ENCODE measurements at regions of chr2 and their contacts with region 1.

Region 1: DNA sequence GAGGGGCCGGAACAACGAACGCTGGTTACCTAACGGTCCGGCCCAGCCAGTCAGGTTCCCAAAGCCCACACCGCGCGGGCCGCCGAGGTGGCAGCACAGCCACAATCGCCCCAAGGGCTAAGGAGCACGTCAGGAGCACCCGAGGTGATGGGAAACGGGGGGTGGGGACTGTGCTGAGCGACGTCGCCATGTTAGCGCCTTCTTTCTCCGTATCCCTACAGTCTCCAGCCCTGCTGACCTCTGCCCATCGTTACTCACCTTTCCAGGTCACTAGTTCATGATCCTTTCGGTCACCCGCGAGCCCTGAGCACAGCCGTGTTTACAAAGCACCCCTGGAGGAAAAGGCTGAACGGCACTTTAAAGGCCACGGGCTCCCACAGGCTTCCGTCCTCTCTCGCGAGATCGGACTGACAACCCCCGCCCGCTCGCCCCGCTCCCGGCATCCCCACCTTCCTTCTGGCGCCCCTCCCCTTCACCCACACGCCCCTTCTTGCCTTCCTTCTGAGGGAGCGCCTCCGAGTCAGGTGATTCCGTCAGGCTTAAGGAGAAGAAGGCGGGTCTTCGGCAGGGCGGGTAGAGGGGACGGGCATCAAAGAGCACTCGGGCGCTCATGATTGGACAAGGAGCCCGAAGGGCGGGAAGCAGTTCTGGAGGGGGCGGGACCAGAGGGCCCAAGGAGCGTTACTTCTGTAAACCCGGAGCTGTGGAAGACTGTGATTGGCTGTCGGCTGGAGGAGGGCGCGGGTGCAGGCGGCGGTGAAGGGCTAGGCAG is at the start of gene ATF2:
- DNase-seq: peak; percentile 96 to 100 (median 99)
- H3K4me3 ChIP-seq: peak within 1 kb of the TSS; percentile 89 to 98
- H3K4me3 Mint-ChIP-seq: peak within 1 kb of the TSS; percentile 94 to 100 (median 100)
- H3K27ac ChIP-seq: peak within 1 kb of the TSS; percentile 90
- H3K27ac Mint-ChIP-seq: peak within 1 kb of the TSS; percentile 87 to 100 (median 99)
- H3K4me1 ChIP-seq: peaks cover 42% of the 10 kb centered on the region
- H3K4me1 Mint-ChIP-seq: peaks cover 27 to 73% (median 47%) of the 10 kb centered on the region in 4 donors
- H3K27me3 ChIP-seq: no peaks in the 10 kb centered on the region
- H3K27me3 Mint-ChIP-seq: no peaks in the 10 kb centered on the region
- total RNA-seq, gene ATF2: 66.1 to 67.4 TPM

Region 2: DNA sequence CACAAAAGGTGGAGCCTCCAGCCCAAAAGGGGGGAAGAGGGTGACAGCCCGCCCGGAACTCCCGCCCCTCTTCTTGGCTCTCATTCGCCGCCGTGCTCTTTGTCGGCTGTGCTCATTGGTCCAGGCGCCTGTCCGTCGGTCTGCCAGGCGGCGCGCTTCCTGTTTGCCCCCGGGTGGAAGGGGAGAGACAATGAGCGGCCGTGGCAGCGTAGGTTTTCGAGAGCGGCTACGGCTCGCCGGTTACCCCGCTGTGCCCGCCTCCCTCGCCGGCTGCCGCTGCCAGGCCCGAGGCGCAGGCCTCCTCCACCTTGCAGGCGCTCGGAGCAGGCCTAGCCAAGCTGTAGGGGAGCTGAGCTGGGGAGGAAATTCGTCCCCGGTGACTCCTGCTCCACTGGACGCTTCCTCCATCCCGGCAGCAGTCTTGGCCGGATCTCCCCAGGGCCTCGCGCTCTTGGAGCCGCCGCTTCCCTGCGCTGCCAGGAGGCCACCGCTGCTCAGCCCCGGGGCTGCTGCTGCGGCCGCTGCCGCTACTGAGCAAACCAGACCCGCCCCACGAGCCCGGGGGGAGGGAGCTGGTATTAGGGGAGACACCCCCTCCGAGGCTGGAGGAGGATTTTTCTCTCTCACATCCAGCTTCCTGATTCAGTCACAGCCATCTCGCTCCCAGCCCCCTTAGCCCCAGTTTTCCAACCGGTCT is 1202.5 kb before region 1 on chr2 and contains the start of gene SP3:
- CTCF ChIA-PET with region 1: no interaction called
- POLR2A ChIA-PET with region 1: no interaction called
- intact Hi-C with region 1: loop called (anchors 2 kb)
- DNase-seq: peak; percentile 95 to 97 (median 96)
- H3K4me3 ChIP-seq: peak within 1 kb of the TSS; percentile 53 to 83
- H3K4me3 Mint-ChIP-seq: peak within 1 kb of the TSS; percentile 90 to 99 (median 96)
- H3K27ac ChIP-seq: peak within 1 kb of the TSS; percentile 96
- H3K27ac Mint-ChIP-seq: peak within 1 kb of the TSS; percentile 94 to 100 (median 98)
- H3K4me1 ChIP-seq: peaks cover 33% of the 10 kb centered on the region
- H3K4me1 Mint-ChIP-seq: peaks cover 23 to 51% (median 35%) of the 10 kb centered on the region in 4 donors
- H3K27me3 ChIP-seq: no peaks in the 10 kb centered on the region
- H3K27me3 Mint-ChIP-seq: no peaks in the 10 kb centered on the region
- total RNA-seq, gene SP3: 117 to 130 TPM

Region 3: GRCh38 chr2:174395284-174395968 is 772.6 kb before region 1 on chr2 and contains the start of gene SCRN3:
- CTCF ChIA-PET with region 1: no interaction called
- POLR2A ChIA-PET with region 1: no interaction called
- intact Hi-C with region 1: loop called (anchors 1 kb)
- DNase-seq: peak; percentile 77 to 90 (median 83)
- H3K4me3 ChIP-seq: peak within 1 kb of the TSS; percentile 92 to 96
- H3K4me3 Mint-ChIP-seq: peak within 1 kb of the TSS; percentile 96 to 99 (median 98)
- H3K27ac ChIP-seq: peak within 1 kb of the TSS; percentile 97
- H3K27ac Mint-ChIP-seq: peak within 1 kb of the TSS; percentile 99 to 100 (median 99)
- H3K4me1 ChIP-seq: peaks cover 39% of the 10 kb centered on the region
- H3K4me1 Mint-ChIP-seq: peaks cover 32 to 64% (median 43%) of the 10 kb centered on the region in 4 donors
- H3K27me3 ChIP-seq: no peaks in the 10 kb centered on the region
- H3K27me3 Mint-ChIP-seq: no peaks in the 10 kb centered on the region
- total RNA-seq, gene SCRN3: 14.7 to 15.2 TPM

Region 4: GRCh38 chr2:174771631-174772471 is 396.1 kb before region 1 on chr2:
- CTCF ChIA-PET with region 1: no interaction called
- POLR2A ChIA-PET with region 1: no interaction called
- intact Hi-C with region 1: loop called (anchors 10 kb)
- DNase-seq: no peak
- H3K4me3 ChIP-seq: no peak overlapping the region
- H3K4me3 Mint-ChIP-seq: peak overlapping the region in 1 of 8 donors; percentile 3
- H3K27ac ChIP-seq: no peak overlapping the region
- H3K27ac Mint-ChIP-seq: peak overlapping the region in 4 of 7 donors; percentile 4 to 82 (median 78)
- H3K4me1 ChIP-seq: peaks cover 13% of the 10 kb centered on the region
- H3K4me1 Mint-ChIP-seq: peaks cover 10 to 23% (median 13%) of the 10 kb centered on the region in 4 donors
- H3K27me3 ChIP-seq: no peaks in the 10 kb centered on the region
- H3K27me3 Mint-ChIP-seq: no peaks in the 10 kb centered on the region

Region 5: DNA sequence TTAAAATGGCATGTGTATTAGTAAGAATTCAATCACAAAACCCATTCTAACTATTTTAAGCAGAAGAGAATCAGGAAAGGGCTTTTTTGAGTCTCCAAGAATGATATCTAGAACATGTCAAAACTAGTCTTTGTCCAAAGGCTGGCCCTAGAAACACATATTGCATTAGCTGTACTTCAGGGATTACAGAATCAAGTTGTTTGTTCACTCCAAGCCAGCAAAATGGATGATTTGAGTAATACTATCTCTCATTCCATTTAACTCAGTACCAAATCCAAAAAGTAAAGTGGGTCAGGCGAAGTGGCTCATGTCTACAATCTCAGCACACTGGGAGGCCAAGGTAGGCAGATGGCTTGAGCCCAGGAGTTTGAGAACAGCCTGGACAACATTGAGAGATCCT is 41.3 kb before region 1 on chr2:
- CTCF ChIA-PET with region 1: no interaction called
- POLR2A ChIA-PET with region 1: no interaction called
- intact Hi-C with region 1: loop called (anchors 5 kb)
- DNase-seq: no peak
- H3K4me3 ChIP-seq: no peak overlapping the region
- H3K4me3 Mint-ChIP-seq: no peak overlapping the region
- H3K27ac ChIP-seq: no peak overlapping the region
- H3K27ac Mint-ChIP-seq: peak overlapping the region in 1 of 7 donors; percentile 80
- H3K4me1 ChIP-seq: no peaks in the 10 kb centered on the region
- H3K4me1 Mint-ChIP-seq: peaks cover 10 to 26% (median 15%) of the 10 kb centered on the region in 4 donors
- H3K27me3 ChIP-seq: no peaks in the 10 kb centered on the region
- H3K27me3 Mint-ChIP-seq: no peaks in the 10 kb centered on the region

Region 6: GRCh38 chr2:175579646-175580045 is 411.7 kb after region 1 on chr2:
- CTCF ChIA-PET with region 1: no interaction called
- POLR2A ChIA-PET with region 1: no interaction called
- intact Hi-C with region 1: no loop called
- DNase-seq: no peak
- H3K4me3 ChIP-seq: no peak overlapping the region
- H3K4me3 Mint-ChIP-seq: no peak overlapping the region
- H3K27ac ChIP-seq: no peak overlapping the region
- H3K27ac Mint-ChIP-seq: no peak overlapping the region
- H3K4me1 ChIP-seq: no peaks in the 10 kb centered on the region
- H3K4me1 Mint-ChIP-seq: no peaks in the 10 kb centered on the region
- H3K27me3 ChIP-seq: no peaks in the 10 kb centered on the region
- H3K27me3 Mint-ChIP-seq: peaks cover 0 to 7% of the 10 kb centered on the region in 2 donors

Region 7: GRCh38 chr2:176001916-176002687 is 834.1 kb after region 1 on chr2 and contains the start of gene LNPK:
- CTCF ChIA-PET with region 1: no interaction called
- POLR2A ChIA-PET with region 1: interaction called, 5 read pairs
- intact Hi-C with region 1: loop called (anchors 10 kb)
- DNase-seq: peak; percentile 88 to 95 (median 92)
- H3K4me3 ChIP-seq: peak within 1 kb of the TSS; percentile 76 to 77
- H3K4me3 Mint-ChIP-seq: peak within 1 kb of the TSS; percentile 81 to 94 (median 90)
- H3K27ac ChIP-seq: peak within 1 kb of the TSS; percentile 74
- H3K27ac Mint-ChIP-seq: peak within 1 kb of the TSS; percentile 61 to 98 (median 91)
- H3K4me1 ChIP-seq: peaks cover 16% of the 10 kb centered on the region
- H3K4me1 Mint-ChIP-seq: peaks cover 12 to 33% (median 17%) of the 10 kb centered on the region in 4 donors
- H3K27me3 ChIP-seq: no peaks in the 10 kb centered on the region
- H3K27me3 Mint-ChIP-seq: no peaks in the 10 kb centered on the region
- total RNA-seq, gene LNPK: 30.4 to 31.3 TPM

Measured in CD4-positive, alpha-beta memory T cell (primary cell).